Sigmoid colon (tissue), 7 donors: ENCODE measurements at regions of chr19 and their contacts with region 1.

Region 1: GRCh38 chr19:13932911-13933393 is 5.3 kb downstream of the PODNL1 start:
- DNase-seq: no peak
- H3K4me3 ChIP-seq: no peak overlapping the region
- H3K27ac ChIP-seq: no peak overlapping the region
- H3K4me1 ChIP-seq: no peaks in the 10 kb centered on the region
- H3K27me3 ChIP-seq: peaks cover 6 to 43% (median 19%) of the 10 kb centered on the region in 3 donors
- CTCF ChIP-seq: no peak
- EP300 ChIP-seq: no peak
- POLR2A ChIP-seq: no peak

Region 2: DNA sequence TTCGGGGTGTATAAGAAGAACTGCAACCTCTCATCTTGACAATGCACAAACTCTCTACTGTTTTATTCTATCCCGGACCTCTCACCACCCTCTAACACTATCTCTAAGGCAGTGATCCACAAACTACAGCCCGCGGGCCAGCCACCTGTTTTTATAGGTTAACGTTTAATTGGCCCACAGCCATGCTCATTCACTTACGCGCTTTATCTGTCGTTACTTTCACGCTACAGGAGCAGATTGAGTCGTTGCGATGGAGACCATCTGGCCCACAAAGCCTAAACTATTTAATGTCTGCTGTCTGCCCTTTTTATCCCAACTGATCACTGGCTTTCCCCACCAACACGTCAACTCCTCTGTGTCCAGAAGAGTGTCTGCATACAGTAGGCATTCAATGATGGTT is 585.6 kb before region 1 on chr19:
- intact Hi-C with region 1: loop called (anchors 5 kb)
- DNase-seq: no peak
- H3K4me3 ChIP-seq: no peak overlapping the region
- H3K27ac ChIP-seq: no peak overlapping the region
- H3K4me1 ChIP-seq: no peaks in the 10 kb centered on the region
- H3K27me3 ChIP-seq: peaks cover 0 to 6% (median 0%) of the 10 kb centered on the region in 3 donors
- CTCF ChIP-seq: no peak
- EP300 ChIP-seq: no peak
- POLR2A ChIP-seq: no peak